ENCODE measurements at regions of chr4 and their contacts with region 1.

Region 1: DNA sequence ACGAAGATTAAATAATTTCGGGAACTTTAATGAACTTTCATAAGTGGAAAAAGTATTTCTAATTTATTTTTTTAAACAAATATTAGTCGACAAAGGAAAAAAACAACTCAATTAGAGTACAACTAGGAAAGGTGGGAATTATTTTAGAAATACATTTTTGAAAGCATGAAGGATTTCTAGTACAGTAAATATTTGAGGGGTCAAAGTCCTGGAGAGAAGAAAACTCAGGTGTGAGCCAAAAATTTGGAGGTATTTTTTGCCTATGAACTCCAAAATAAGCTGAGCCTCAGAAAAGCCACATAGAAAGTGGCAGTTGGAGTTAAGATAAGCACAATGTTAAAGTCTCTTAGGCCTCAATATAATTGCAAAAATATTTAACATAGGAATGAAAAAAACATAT is 2017.3 kb downstream of the C4orf33 start:
- DNase-seq: no peak
- ATAC-seq: no peak
- H3K4me3 ChIP-seq: no peak overlapping the region
- H3K27ac ChIP-seq: no peak overlapping the region
- H3K4me1 ChIP-seq: no peaks in the 10 kb centered on the region
- H3K27me3 ChIP-seq: no peaks in the 10 kb centered on the region
- CTCF ChIP-seq: no peak

Region 2: GRCh38 chr4:130449741-130450140 is 663.5 kb before region 1 on chr4:
- CTCF ChIA-PET with region 1: interaction called, 10 read pairs
- POLR2A ChIA-PET with region 1: no interaction called
- intact Hi-C with region 1: no loop called
- DNase-seq: no peak
- ATAC-seq: no peak
- H3K4me3 ChIP-seq: no peak overlapping the region
- H3K27ac ChIP-seq: no peak overlapping the region
- H3K4me1 ChIP-seq: no peaks in the 10 kb centered on the region
- H3K27me3 ChIP-seq: no peaks in the 10 kb centered on the region
- CTCF ChIP-seq: no peak

Region 3: GRCh38 chr4:131337936-131338335 is 224.7 kb after region 1 on chr4:
- CTCF ChIA-PET with region 1: no interaction called
- POLR2A ChIA-PET with region 1: no interaction called
- intact Hi-C with region 1: no loop called
- DNase-seq: no peak
- ATAC-seq: no peak
- H3K4me3 ChIP-seq: no peak overlapping the region
- H3K27ac ChIP-seq: no peak overlapping the region
- H3K4me1 ChIP-seq: no peaks in the 10 kb centered on the region
- H3K27me3 ChIP-seq: no peaks in the 10 kb centered on the region
- CTCF ChIP-seq: no peak

Measured in PC-3 (cell line).